Naive thymus-derived CD4-positive, alpha-beta T cell (primary cell): ENCODE measurements at regions of chr2 and their contacts with region 1.

Region 1: DNA sequence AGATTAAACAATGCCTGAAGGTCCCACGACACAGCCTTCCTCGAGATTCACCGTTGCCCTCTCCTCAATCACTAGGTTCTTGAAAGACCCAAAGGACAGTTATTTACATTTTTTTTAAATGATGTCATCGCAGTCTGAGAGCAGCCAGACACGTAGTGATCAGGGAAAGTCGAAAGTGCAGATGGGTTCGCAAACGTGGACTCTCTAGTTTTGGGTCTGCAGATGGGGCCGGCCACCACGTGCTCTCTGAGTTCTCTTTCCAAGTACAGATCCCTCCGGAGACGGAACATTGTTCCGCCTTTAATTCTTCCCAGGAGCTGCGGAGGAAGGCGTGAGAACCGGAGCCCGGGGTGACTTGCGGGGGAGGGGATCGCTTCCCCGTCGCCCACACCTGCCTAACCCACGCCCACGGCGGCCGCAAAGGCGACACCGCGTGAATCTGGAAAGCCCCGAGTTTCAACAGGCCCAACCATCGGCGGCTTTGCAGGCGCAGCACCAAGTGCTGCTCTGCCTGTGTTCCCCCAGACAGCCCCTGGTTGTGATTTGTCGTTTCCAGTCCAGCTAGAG is 54.3 kb downstream of the PKDCC start:
- DNase-seq: peak; percentile 87 to 97 (median 94)
- ATAC-seq: peak; percentile 85
- H3K4me3 ChIP-seq: peak overlapping the region; percentile 44
- H3K4me3 Mint-ChIP-seq: peak overlapping the region in 8 of 10 donors; percentile 76 to 91 (median 85)
- H3K27ac ChIP-seq: peak overlapping the region; percentile 95
- H3K27ac Mint-ChIP-seq: peak overlapping the region in 2 of 9 donors; percentile 97 to 99
- H3K4me1 ChIP-seq: peaks cover 74 to 81% of the 10 kb centered on the region in 2 donors
- H3K4me1 Mint-ChIP-seq: peaks cover 37 to 69% (median 50%) of the 10 kb centered on the region in 7 donors
- H3K27me3 ChIP-seq: no peaks in the 10 kb centered on the region
- H3K27me3 Mint-ChIP-seq: no peaks in the 10 kb centered on the region

Region 2: DNA sequence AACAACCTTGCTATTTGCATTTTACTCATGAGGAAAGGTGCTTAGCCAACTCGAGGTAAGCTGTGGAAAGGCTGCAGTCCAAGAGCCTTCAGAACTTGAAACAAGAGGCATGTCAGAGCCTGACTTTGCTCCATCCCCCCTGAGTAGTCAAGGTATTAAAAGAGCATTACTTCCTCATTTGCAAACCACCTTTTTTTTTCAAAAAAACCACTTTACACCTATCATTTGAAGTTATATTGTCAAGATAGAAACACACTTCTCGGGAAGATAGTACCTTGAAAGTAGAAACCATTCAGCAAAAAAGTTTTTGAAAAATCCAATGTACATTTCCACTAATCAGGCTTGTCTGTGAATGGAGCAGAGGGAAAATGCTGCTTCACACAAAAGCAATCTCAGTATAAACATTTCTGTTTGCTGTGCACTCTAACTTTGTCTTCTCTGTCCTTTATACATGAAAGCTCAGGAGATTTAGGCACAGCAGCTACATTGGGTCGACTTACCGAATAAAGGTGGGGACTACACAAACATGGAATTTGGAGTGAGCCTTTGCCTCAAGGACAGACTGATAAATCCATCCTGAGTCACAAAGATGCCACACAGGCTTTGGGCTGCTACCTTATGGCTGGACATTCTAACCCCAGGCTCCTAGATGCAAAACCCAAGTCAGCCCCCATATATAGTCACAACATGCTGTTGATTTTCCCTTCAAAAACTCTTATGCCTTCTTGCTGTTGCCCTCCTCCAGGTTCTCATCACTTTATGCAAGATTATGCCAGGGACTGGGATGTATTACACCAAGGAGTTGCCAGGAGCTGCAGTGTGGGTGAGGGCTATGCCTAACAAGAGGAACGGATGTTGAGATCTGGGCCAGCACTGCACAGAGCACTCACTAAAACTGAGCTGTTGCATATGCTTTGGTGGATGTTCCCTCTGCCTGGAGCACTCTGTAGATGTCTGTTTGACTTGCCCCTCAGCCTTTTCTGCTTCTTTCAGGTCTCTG is 25.6 kb after region 1 on chr2:
- CTCF ChIA-PET with region 1: interaction called, 19 read pairs
- POLR2A ChIA-PET with region 1: interaction called, 636 read pairs
- intact Hi-C with region 1: loop called (anchors 1 kb)
- DNase-seq: peak in 7 of 9 donors; percentile 42 to 69 (median 60)
- ATAC-seq: peak; percentile 63
- H3K4me3 ChIP-seq: peak overlapping the region; percentile 33
- H3K4me3 Mint-ChIP-seq: peak overlapping the region; percentile 63 to 86 (median 78)
- H3K27ac ChIP-seq: peak overlapping the region; percentile 70
- H3K27ac Mint-ChIP-seq: peak overlapping the region; percentile 68 to 97 (median 94)
- H3K4me1 ChIP-seq: peaks cover 87 to 96% of the 10 kb centered on the region in 2 donors
- H3K4me1 Mint-ChIP-seq: peaks cover 72 to 98% (median 92%) of the 10 kb centered on the region in 7 donors
- H3K27me3 ChIP-seq: no peaks in the 10 kb centered on the region
- H3K27me3 Mint-ChIP-seq: no peaks in the 10 kb centered on the region

Region 3: DNA sequence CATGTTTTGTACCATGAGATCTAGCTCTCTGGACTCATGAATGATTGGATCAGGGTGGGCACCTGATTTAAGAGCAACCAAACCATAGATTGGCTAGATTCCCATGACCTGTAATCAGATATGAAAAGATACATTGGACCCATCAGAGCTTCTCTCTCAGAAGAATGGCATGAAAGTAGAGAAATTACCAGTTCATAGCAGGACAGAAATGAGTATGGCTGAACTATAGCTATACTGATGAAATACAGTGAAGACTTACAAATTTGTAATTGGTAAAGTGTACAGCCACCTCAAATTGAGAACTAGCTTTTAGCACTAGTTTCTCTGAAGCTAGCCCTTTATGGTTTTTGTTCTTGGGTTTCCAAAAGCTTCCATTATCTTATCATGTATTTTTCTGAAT is 48.1 kb after region 1 on chr2:
- CTCF ChIA-PET with region 1: no interaction called
- POLR2A ChIA-PET with region 1: interaction called, 11 read pairs
- intact Hi-C with region 1: no loop called
- DNase-seq: no peak
- ATAC-seq: no peak
- H3K4me3 ChIP-seq: no peak overlapping the region
- H3K4me3 Mint-ChIP-seq: no peak overlapping the region
- H3K27ac ChIP-seq: no peak overlapping the region
- H3K27ac Mint-ChIP-seq: peak overlapping the region in 2 of 9 donors; percentile 21 to 41
- H3K4me1 ChIP-seq: no peaks in the 10 kb centered on the region
- H3K4me1 Mint-ChIP-seq: peaks cover 5 to 11% (median 7%) of the 10 kb centered on the region in 7 donors
- H3K27me3 ChIP-seq: no peaks in the 10 kb centered on the region
- H3K27me3 Mint-ChIP-seq: peaks cover 0 to 3% (median 0%) of the 10 kb centered on the region in 5 donors

Region 4: DNA sequence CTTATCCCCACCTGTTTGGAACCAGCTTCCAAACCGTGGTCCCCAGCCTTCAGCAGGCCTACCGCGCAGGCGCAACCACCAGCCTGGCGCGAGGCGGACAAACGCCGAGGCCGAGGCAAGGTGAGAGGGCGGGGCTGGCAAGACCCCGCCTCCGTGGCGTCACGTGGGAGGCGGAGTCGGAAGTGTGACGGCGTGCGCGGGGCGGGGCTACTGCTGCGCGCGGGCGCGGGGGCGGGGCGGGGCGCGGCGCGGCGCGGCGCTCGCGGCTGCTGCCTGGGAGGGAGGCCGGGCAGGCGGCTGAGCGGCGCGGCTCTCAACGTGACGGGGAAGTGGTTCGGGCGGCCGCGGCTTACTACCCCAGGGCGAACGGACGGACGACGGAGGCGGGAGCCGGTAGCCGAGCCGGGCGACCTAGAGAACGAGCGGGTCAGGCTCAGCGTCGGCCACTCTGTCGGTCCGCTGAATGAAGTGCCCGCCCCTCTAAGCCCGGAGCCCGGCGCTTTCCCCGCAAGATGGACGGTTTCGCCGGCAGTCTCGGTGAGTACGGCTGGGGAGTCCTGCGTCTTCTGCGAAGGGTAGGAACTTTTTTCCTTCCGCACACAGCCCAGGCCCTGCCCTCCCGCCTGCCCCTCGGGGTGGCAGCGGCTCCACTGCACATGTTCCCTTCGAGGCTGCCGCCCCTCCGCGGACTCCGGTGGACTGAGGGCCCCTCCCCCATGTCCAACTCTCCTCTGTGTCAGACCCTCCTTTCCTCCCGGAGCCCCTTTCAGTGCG is 67.2 kb after region 1 on chr2 and contains the start of gene EML4:
- CTCF ChIA-PET with region 1: interaction called, 17 read pairs
- POLR2A ChIA-PET with region 1: interaction called, 187 read pairs
- intact Hi-C with region 1: loop called (anchors 1 kb)
- DNase-seq: peak; percentile 82 to 98 (median 89)
- ATAC-seq: peak; percentile 97
- H3K4me3 ChIP-seq: peak within 1 kb of the TSS; percentile 88
- H3K4me3 Mint-ChIP-seq: peak within 1 kb of the TSS in 2 of 10 donors; percentile 26 to 49
- H3K27ac ChIP-seq: peak within 1 kb of the TSS; percentile 96
- H3K27ac Mint-ChIP-seq: peak within 1 kb of the TSS in 4 of 9 donors; percentile 75 to 94 (median 84)
- H3K4me1 ChIP-seq: peaks cover 15 to 21% of the 10 kb centered on the region in 2 donors
- H3K4me1 Mint-ChIP-seq: peaks cover 9 to 27% (median 12%) of the 10 kb centered on the region in 7 donors
- H3K27me3 ChIP-seq: no peaks in the 10 kb centered on the region
- H3K27me3 Mint-ChIP-seq: peaks cover 0 to 9% (median 0%) of the 10 kb centered on the region in 5 donors
- total RNA-seq, gene EML4: 91.1 to 167 (median 143) TPM

Region 5: GRCh38 chr2:42196403-42197267 is 94.5 kb after region 1 on chr2:
- CTCF ChIA-PET with region 1: interaction called, 27 read pairs
- POLR2A ChIA-PET with region 1: interaction called, 12 read pairs
- intact Hi-C with region 1: no loop called
- DNase-seq: peak in 7 of 9 donors; percentile 56 to 75 (median 68)
- ATAC-seq: peak; percentile 91
- H3K4me3 ChIP-seq: no peak overlapping the region
- H3K4me3 Mint-ChIP-seq: peak overlapping the region in 9 of 10 donors; percentile 1 to 66 (median 41)
- H3K27ac ChIP-seq: peak overlapping the region; percentile 22
- H3K27ac Mint-ChIP-seq: peak overlapping the region in 8 of 9 donors; percentile 17 to 91 (median 74)
- H3K4me1 ChIP-seq: peaks cover 42 to 48% of the 10 kb centered on the region in 2 donors
- H3K4me1 Mint-ChIP-seq: peaks cover 54 to 93% (median 84%) of the 10 kb centered on the region in 7 donors
- H3K27me3 ChIP-seq: no peaks in the 10 kb centered on the region
- H3K27me3 Mint-ChIP-seq: no peaks in the 10 kb centered on the region

Region 6: GRCh38 chr2:42494355-42495233 is 392.5 kb after region 1 on chr2:
- CTCF ChIA-PET with region 1: no interaction called
- POLR2A ChIA-PET with region 1: no interaction called
- intact Hi-C with region 1: loop called (anchors 5 to 10 kb)
- DNase-seq: peak; percentile 60 to 83 (median 77)
- ATAC-seq: peak; percentile 74
- H3K4me3 ChIP-seq: peak overlapping the region; percentile 60
- H3K4me3 Mint-ChIP-seq: peak overlapping the region; percentile 82 to 99 (median 96)
- H3K27ac ChIP-seq: peak overlapping the region; percentile 51
- H3K27ac Mint-ChIP-seq: peak overlapping the region; percentile 37 to 93 (median 83)
- H3K4me1 ChIP-seq: peaks cover 0 to 10% of the 10 kb centered on the region in 2 donors
- H3K4me1 Mint-ChIP-seq: peaks cover 0 to 18% (median 10%) of the 10 kb centered on the region in 7 donors
- H3K27me3 ChIP-seq: no peaks in the 10 kb centered on the region
- H3K27me3 Mint-ChIP-seq: peaks cover 0 to 49% (median 5%) of the 10 kb centered on the region in 5 donors

Region 7: GRCh38 chr2:42685303-42685702 is 583.2 kb after region 1 on chr2:
- CTCF ChIA-PET with region 1: no interaction called
- POLR2A ChIA-PET with region 1: no interaction called
- intact Hi-C with region 1: no loop called
- DNase-seq: no peak
- ATAC-seq: no peak
- H3K4me3 ChIP-seq: no peak overlapping the region
- H3K4me3 Mint-ChIP-seq: no peak overlapping the region
- H3K27ac ChIP-seq: no peak overlapping the region
- H3K27ac Mint-ChIP-seq: peak overlapping the region in 1 of 9 donors; percentile 72
- H3K4me1 ChIP-seq: no peaks in the 10 kb centered on the region
- H3K4me1 Mint-ChIP-seq: peaks cover 0 to 11% (median 8%) of the 10 kb centered on the region in 7 donors
- H3K27me3 ChIP-seq: no peaks in the 10 kb centered on the region
- H3K27me3 Mint-ChIP-seq: no peaks in the 10 kb centered on the region

Region 8: DNA sequence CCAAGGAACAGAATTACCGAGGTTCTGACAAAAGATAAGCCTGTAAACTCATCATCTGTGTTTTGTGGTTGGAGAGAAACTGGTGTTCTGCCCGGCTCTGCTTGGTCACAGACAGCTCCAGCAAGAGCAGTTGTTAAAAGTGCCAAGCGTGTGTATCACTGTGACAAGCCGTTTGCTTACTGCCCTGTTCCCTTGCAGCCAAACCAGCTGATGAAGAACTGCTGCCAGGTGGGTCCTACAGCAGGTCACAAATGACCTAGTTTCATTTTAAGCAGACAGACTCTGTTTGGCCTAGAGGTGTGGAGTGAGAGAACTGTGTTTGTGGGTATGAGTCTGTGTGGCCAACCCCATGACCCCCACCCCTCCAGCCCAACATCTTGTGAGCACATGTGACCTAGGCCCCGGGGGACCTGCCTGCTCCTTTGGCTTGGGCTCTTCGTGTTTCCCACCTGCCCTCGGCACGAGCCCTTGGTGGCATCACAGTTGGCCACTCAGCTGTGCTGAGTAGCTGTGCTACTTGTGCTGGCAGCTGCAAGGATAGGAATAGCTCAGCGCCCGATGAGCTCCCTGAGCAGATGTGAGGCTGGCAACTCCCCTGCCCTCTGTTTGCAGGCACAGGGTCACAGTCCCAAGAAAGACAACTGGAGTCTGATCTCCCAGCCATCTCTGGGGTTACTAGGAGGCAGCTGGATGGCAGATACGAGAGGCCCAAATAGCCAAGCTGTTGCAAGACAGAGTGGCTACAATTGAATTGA is 652.1 kb after region 1 on chr2:
- CTCF ChIA-PET with region 1: no interaction called
- POLR2A ChIA-PET with region 1: no interaction called
- intact Hi-C with region 1: no loop called
- DNase-seq: no peak
- ATAC-seq: peak; percentile 28
- H3K4me3 ChIP-seq: no peak overlapping the region
- H3K4me3 Mint-ChIP-seq: no peak overlapping the region
- H3K27ac ChIP-seq: no peak overlapping the region
- H3K27ac Mint-ChIP-seq: peak overlapping the region in 2 of 9 donors; percentile 55 to 62
- H3K4me1 ChIP-seq: no peaks in the 10 kb centered on the region
- H3K4me1 Mint-ChIP-seq: peaks cover 0 to 22% (median 5%) of the 10 kb centered on the region in 7 donors
- H3K27me3 ChIP-seq: no peaks in the 10 kb centered on the region
- H3K27me3 Mint-ChIP-seq: no peaks in the 10 kb centered on the region